Activated naive CD4-positive, alpha-beta T cell treated with anti-CD3 and anti-CD28 coated beads for 36 hours (primary cell): ENCODE measurements at regions of chr10 and their contacts with region 1.

Region 1: GRCh38 chr10:79374312-79375191 is 27.3 kb downstream of the PPIF start:
- DNase-seq: peak; percentile 85
- H3K4me3 Mint-ChIP-seq: no peak overlapping the region
- H3K27ac Mint-ChIP-seq: no peak overlapping the region
- H3K4me1 Mint-ChIP-seq: peaks cover 2% of the 10 kb centered on the region
- H3K27me3 Mint-ChIP-seq: no peaks in the 10 kb centered on the region

Region 2: DNA sequence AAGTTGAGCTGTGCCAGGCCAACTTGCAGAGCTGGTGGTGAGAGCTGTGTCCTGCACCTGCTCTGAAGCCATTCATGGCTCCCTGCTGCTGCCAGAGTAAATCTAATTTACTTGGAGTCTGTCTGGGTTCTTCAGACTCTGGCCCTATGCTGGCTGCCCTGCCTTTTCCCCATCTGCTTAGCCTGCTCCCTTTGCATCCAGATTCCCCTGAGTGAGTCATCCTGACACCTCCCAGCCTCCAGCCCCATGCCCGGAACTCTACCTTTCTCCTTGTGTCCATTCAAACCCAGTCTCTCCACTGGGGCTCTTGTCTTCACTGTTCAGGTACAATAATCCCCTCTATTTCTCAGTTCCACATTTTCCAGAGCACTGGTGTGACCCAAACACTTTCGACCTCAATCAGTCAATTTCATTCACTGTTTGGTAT is 740.1 kb before region 1 on chr10:
- CTCF ChIA-PET with region 1: no interaction called
- intact Hi-C with region 1: no loop called
- DNase-seq: no peak
- H3K4me3 Mint-ChIP-seq: no peak overlapping the region
- H3K27ac Mint-ChIP-seq: peak overlapping the region; percentile 4
- H3K4me1 Mint-ChIP-seq: peaks cover 2% of the 10 kb centered on the region
- H3K27me3 Mint-ChIP-seq: no peaks in the 10 kb centered on the region

Region 3: DNA sequence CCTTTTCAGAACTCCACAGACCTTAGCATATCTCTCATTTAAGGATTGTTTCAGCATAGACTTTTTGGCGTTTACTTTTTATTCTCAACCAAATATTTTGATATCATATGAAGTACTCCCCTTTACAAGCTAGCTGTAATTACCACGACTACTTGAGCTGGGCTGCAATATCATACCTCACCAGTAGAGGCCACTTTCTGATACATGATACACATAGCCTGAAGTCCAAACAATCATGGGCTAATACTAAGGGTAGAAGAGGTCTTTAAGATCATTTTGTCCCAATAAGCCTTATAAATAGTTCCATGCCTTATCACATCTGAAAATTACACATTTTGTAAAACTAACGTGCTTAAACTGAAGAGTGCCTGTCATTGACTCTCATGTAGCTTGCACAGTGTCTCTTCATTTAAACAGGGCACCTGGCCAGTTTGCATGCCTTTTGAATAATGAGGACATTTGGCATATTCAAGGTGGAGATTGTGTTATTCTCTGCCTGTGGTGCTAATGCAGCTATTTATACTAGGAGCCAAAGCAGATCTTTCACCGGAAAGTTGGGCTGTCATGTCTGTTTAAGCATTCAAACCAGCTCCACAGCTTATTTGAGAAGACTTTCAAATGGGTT is 709.5 kb before region 1 on chr10:
- CTCF ChIA-PET with region 1: no interaction called
- intact Hi-C with region 1: no loop called
- DNase-seq: peak; percentile 24
- H3K4me3 Mint-ChIP-seq: no peak overlapping the region
- H3K27ac Mint-ChIP-seq: no peak overlapping the region
- H3K4me1 Mint-ChIP-seq: no peaks in the 10 kb centered on the region
- H3K27me3 Mint-ChIP-seq: peaks cover 34% of the 10 kb centered on the region

Region 4: GRCh38 chr10:79475877-79476276 is 101.3 kb after region 1 on chr10:
- CTCF ChIA-PET with region 1: interaction called, 18 read pairs
- intact Hi-C with region 1: no loop called
- DNase-seq: no peak
- H3K4me3 Mint-ChIP-seq: no peak overlapping the region
- H3K27ac Mint-ChIP-seq: no peak overlapping the region
- H3K4me1 Mint-ChIP-seq: no peaks in the 10 kb centered on the region
- H3K27me3 Mint-ChIP-seq: peaks cover 2% of the 10 kb centered on the region

Region 5: GRCh38 chr10:79487296-79488194 is 113.0 kb after region 1 on chr10:
- CTCF ChIA-PET with region 1: interaction called, 29 read pairs
- intact Hi-C with region 1: loop called (anchors 1 kb)
- DNase-seq: peak; percentile 47
- H3K4me3 Mint-ChIP-seq: no peak overlapping the region
- H3K27ac Mint-ChIP-seq: no peak overlapping the region
- H3K4me1 Mint-ChIP-seq: no peaks in the 10 kb centered on the region
- H3K27me3 Mint-ChIP-seq: no peaks in the 10 kb centered on the region

Region 6: DNA sequence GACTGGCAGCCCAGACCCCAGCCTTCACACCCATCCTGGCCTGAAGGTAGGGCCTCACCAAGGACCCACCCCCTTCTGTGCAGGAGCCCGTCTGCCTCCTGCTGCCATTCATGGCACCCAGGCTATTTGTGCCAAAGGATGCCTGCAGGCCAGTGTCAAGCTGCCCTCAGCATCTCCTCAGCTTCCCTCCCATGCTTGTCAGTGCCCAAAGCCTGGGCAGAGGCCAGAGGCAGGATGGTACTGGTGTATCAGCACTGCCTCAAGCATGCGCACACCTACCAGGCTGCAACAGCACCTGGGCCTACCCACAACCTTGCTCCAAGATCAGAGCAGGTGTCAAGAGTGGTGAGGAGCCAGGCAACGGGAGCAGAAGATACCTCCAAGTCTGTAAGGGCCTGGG is 263.8 kb after region 1 on chr10:
- CTCF ChIA-PET with region 1: no interaction called
- intact Hi-C with region 1: no loop called
- DNase-seq: no peak
- H3K4me3 Mint-ChIP-seq: no peak overlapping the region
- H3K27ac Mint-ChIP-seq: no peak overlapping the region
- H3K4me1 Mint-ChIP-seq: no peaks in the 10 kb centered on the region
- H3K27me3 Mint-ChIP-seq: no peaks in the 10 kb centered on the region

Region 7: DNA sequence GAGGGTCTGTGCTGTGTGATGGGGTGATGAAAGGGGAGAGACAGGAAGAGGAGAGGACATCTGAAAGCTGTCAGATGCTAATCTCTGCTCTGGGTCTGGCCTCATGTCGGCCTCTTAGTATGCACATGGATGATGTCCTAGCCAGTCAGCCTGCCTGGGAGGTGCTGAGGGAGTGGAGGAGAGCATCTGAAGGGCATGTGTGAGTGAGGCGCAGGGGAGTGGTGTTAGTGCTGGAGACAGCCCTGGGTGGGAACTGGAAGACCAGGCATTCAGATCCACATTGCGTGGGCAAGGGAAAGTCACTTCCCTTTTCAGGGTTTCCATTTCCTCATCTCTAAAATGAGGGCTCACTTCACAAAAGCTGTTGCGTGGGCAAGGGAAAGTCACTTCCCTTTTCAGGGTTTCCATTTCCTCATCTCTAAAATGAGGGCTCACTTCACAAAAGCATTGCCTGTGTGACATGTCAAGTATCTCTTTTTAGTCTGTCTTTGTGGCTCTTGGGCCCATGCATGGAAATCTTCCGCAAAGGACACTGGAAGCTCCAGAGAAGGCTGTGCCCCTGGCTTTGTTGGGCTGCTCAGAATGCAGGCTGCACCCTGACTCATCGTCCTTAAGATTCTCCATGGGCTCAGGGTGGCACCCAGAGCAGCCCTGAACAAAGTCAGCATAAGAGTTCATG is 564.3 kb after region 1 on chr10:
- CTCF ChIA-PET with region 1: no interaction called
- intact Hi-C with region 1: no loop called
- DNase-seq: peak; percentile 36
- H3K4me3 Mint-ChIP-seq: no peak overlapping the region
- H3K27ac Mint-ChIP-seq: no peak overlapping the region
- H3K4me1 Mint-ChIP-seq: peaks cover 14% of the 10 kb centered on the region
- H3K27me3 Mint-ChIP-seq: peaks cover 3% of the 10 kb centered on the region

Region 8: GRCh38 chr10:80144067-80144695 is 769.6 kb after region 1 on chr10:
- CTCF ChIA-PET with region 1: interaction called, 10 read pairs
- intact Hi-C with region 1: loop called (anchors 5 kb)
- DNase-seq: peak; percentile 61
- H3K4me3 Mint-ChIP-seq: peak overlapping the region; percentile 67
- H3K27ac Mint-ChIP-seq: no peak overlapping the region
- H3K4me1 Mint-ChIP-seq: peaks cover 15% of the 10 kb centered on the region
- H3K27me3 Mint-ChIP-seq: peaks cover 5% of the 10 kb centered on the region